GM10248 (cell line): ENCODE measurements at regions of chr19 and their contacts with region 1.

Region 1: GRCh38 chr19:12333162-12334159 is at the start of gene ZNF563:
- DNase-seq: peak; percentile 94
- CTCF ChIP-seq: no peak

Region 2: DNA sequence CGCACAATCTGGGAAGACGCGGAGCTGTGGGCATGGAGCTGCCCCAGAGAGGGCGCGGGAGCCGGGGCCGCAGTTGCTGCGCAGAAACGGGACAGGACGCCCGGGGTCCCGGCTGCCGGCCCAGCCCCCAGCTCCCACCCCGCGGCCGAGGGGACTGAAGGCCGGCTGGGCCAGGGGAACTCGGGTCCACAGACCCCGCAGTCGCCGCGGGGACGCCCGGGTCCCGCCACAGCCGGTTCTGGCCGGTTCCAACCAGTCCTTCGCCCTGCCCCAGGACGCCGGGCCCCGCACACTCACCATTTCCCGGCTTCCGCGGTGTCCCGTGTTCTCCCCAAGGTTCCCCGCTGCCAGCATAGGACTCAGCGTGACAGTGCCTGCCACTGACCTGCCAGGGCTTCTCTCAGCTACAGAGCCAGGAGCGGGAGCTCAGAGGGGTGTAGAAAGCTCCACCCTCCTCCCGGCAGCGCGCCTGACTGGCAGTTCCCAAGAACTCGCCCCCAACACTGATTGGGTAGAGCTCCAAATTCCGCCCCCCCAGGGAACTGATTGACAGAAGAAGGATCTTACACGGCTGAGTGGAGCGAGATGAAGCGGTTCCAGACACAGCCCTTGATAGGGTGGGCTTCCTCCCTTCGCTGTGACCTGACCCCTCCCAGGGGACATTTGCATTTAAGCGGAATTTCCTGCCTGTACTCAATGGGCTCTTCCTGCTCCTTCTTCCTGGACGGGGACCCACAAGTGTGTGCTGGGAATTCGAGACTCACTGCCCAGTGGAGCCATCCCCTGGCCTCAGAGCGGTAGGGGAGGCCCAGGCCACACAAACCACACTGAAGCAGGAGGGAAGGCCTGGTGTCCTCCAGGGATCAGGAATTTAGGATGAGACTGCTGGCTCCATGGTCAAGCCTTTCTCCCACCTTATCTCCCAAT is 32.0 kb after region 1 on chr19 and contains the start of gene ZNF442:
- CTCF ChIA-PET with region 1: interaction called, 3 read pairs
- POLR2A ChIA-PET with region 1: interaction called, 14 read pairs
- DNase-seq: peak; percentile 96
- CTCF ChIP-seq: peak; percentile 42